HCT116 (cell line): ENCODE measurements at regions of chr5 and their contacts with region 1.

Region 1: DNA sequence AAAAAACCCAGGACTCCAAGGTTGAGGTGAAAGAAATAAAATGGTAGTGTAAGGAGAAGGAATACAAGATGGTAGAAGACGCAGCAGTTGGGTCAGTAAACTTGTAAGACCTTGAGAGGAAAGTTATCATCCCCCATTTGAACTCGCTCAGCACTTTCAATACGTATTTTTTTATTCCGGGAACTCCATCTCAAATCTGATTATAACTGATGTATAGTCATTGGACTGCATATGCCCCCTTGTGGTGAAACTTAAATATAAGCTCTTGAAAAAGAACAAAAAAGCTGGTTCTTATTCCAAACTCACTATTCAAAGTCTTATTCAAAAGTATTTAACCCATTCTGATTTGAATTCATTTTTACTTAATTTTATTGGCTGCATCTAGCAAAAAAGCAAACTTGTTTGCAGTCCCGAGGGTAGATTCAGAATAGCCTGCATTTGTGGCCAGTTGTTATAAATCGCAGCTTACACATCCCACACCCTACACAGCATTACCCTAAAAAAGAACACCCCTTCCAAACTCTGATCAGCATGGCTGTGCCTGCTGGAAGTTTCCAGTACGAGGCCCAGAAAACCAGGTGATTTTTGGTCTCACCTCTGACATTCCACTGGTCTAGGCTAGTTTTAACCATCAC is 118.0 kb downstream of the ESM1 start:
- DNase-seq: peak; percentile 38
- ATAC-seq: peak; percentile 59
- H3K4me3 ChIP-seq: no peak overlapping the region
- H3K27ac ChIP-seq: no peak overlapping the region
- H3K4me1 ChIP-seq: peaks cover 0 to 3% of the 10 kb centered on the region in 2 experiments; a peak in 1 of 4 replicates
- H3K27me3 ChIP-seq: peaks cover 10% of the 10 kb centered on the region; the same call in 1 of the 2 replicates
- CTCF ChIP-seq: peak; percentile 44 to 77 (median 69); a peak in 5 of 6 replicates
- POLR2A ChIP-seq: no peak
- RAD21 ChIP-seq: peak; percentile 66

Region 2: DNA sequence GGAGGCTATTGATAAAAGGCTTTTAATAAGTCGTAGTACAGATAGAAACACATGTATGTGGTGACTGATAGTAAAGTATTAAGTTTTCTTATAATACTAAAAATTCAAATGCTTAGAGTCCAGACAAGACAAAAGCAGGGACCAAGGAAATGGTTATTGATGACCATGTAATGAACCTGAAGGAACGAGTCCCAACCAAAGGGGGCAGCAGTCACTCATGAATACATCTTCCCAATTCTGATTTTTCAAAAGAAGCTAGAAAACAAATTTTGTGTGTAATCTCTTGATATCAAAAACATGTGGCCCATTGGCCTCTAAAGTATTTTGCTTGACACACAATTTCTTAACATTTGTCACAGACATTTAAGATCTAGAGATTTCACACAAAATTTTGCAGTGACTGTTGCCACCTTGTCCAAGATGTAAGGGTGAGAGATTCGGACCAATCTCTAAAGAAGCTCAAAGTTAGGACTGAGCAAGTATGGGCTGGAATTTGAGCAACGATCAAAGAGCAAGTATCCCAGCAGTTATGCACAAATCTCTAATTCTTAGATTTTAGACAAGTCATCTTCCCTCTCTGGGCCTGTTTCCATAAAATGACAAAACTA is 623.9 kb before region 1 on chr5:
- CTCF ChIA-PET with region 1: interaction called, 16 read pairs
- POLR2A ChIA-PET with region 1: no interaction called
- RAD21 ChIA-PET with region 1: interaction called, 3 to 5 read pairs
- intact Hi-C with region 1: no loop called
- DNase-seq: peak; percentile 27
- ATAC-seq: peak; percentile 72
- H3K4me3 ChIP-seq: no peak overlapping the region
- H3K27ac ChIP-seq: no peak overlapping the region
- H3K4me1 ChIP-seq: no peaks in the 10 kb centered on the region
- H3K27me3 ChIP-seq: no peaks in the 10 kb centered on the region
- CTCF ChIP-seq: peak; percentile 59 to 77 (median 60)
- POLR2A ChIP-seq: no peak
- RAD21 ChIP-seq: peak; percentile 77

Region 3: GRCh38 chr5:54463713-54464112 is 403.7 kb before region 1 on chr5:
- CTCF ChIA-PET with region 1: no interaction called
- POLR2A ChIA-PET with region 1: no interaction called
- RAD21 ChIA-PET with region 1: no interaction called
- intact Hi-C with region 1: no loop called
- DNase-seq: no peak
- ATAC-seq: no peak
- H3K4me3 ChIP-seq: no peak overlapping the region
- H3K27ac ChIP-seq: no peak overlapping the region
- H3K4me1 ChIP-seq: no peaks in the 10 kb centered on the region
- H3K27me3 ChIP-seq: no peaks in the 10 kb centered on the region
- CTCF ChIP-seq: no peak
- POLR2A ChIP-seq: no peak
- RAD21 ChIP-seq: no peak

Region 4: GRCh38 chr5:54492178-54492577 is 375.2 kb before region 1 on chr5:
- CTCF ChIA-PET with region 1: interaction called, 10 read pairs
- POLR2A ChIA-PET with region 1: no interaction called
- RAD21 ChIA-PET with region 1: no interaction called
- intact Hi-C with region 1: no loop called
- DNase-seq: no peak
- ATAC-seq: no peak
- H3K4me3 ChIP-seq: no peak overlapping the region
- H3K27ac ChIP-seq: no peak overlapping the region
- H3K4me1 ChIP-seq: no peaks in the 10 kb centered on the region
- H3K27me3 ChIP-seq: no peaks in the 10 kb centered on the region
- CTCF ChIP-seq: no peak
- POLR2A ChIP-seq: no peak
- RAD21 ChIP-seq: no peak

Region 5: DNA sequence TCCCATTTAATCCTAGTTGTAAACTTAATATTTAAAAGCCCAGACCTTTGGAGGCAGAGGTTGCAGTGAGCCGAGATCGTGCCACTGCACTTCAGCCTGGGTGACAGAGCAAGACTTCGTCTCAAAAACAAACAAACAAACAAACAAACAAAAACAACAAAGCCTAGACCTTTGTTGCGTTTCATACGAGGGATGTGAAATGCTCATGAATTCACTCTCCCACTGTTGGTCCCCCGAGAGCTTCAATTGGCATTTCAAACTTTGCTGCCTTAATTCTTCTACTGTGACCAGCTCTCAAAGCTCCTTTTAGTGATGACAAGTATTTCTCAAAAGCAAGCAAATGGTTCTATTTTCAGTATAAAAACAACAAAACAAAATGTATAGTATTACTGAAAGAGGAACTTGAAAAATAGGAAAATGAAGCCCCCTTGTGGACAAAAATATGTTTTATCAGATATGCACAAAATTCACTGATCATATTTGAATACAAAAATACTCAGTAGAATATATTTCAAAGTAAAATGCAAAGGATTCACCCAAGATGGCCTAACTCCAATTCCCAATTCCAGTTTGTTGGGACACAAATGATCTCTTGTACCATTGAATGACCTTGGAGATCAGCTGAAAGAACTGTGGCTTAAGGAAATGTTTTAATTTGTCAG is 22.4 kb before region 1 on chr5:
- CTCF ChIA-PET with region 1: interaction called, 24 read pairs
- POLR2A ChIA-PET with region 1: no interaction called
- RAD21 ChIA-PET with region 1: interaction called in 1 of 2 experiments, 5 read pairs
- intact Hi-C with region 1: no loop called
- DNase-seq: peak; percentile 31
- ATAC-seq: no peak
- H3K4me3 ChIP-seq: no peak overlapping the region
- H3K27ac ChIP-seq: no peak overlapping the region
- H3K4me1 ChIP-seq: no peaks in the 10 kb centered on the region
- H3K27me3 ChIP-seq: no peaks in the 10 kb centered on the region
- CTCF ChIP-seq: peak; percentile 23 to 66 (median 64); a peak in 3 of 6 replicates
- POLR2A ChIP-seq: no peak
- RAD21 ChIP-seq: peak; percentile 72

Region 6: GRCh38 chr5:54895816-54896341 is 28.5 kb after region 1 on chr5:
- CTCF ChIA-PET with region 1: interaction called, 15 read pairs
- POLR2A ChIA-PET with region 1: no interaction called
- RAD21 ChIA-PET with region 1: no interaction called
- intact Hi-C with region 1: no loop called
- DNase-seq: peak; percentile 39
- ATAC-seq: peak; percentile 90
- H3K4me3 ChIP-seq: no peak overlapping the region
- H3K27ac ChIP-seq: no peak overlapping the region
- H3K4me1 ChIP-seq: no peaks in the 10 kb centered on the region
- H3K27me3 ChIP-seq: peaks cover 39% of the 10 kb centered on the region
- CTCF ChIP-seq: peak; percentile 51 to 60 (median 59); a peak in 5 of 6 replicates
- POLR2A ChIP-seq: no peak
- RAD21 ChIP-seq: peak; percentile 74